CD4-positive, alpha-beta T cell (primary cell): ENCODE measurements at regions of chr1 and their contacts with region 1.

Region 1: DNA sequence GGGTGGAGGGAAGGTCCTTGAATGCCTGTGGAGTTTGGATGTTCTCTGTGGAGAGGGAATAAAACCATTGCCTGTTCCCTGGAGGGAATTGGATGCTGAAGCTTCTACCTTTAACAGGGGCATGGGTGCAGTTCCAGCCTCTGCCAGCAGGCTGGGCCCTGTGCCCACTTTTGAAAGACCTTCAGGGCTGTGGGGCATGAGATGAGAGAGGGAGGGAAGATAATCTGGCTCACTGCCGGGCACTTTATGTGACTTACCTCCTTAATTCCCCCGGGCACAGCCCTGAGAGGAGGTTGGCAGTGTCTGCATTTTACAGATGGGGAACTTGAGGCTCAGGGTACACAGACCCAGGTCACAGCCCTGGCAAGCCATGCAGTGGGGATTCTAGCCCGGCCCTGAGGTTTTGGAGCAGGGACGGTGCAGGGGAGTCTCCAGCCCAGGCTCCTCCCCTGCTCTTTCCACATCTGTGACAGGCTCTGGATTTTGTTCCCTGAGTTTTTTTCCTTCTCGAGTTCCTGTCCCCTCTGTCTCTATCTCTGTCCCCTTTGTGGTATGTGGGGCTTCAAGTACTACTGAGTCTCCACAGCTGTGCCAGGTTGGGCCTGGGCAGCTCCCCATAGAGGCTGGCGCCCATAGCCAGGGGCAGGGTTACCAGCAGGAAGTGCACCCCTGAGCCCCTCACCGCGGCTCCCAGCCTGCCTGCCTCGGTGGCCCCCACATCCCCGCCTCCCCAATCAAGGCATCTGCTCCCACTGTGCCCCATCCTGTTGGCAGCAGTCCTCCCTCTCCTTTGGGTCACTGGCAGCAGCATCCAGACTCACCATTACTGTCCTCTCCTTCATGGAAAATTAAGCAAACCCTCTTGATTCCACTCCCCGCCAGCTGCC is 14.0 kb upstream of the THEMIS2 start:
- DNase-seq: peak; percentile 73 to 91 (median 85)
- ATAC-seq: peak; percentile 100
- H3K4me3 ChIP-seq: no peak overlapping the region
- H3K4me3 Mint-ChIP-seq: no peak overlapping the region
- H3K27ac ChIP-seq: no peak overlapping the region
- H3K27ac Mint-ChIP-seq: no peak overlapping the region
- H3K4me1 ChIP-seq: peaks cover 25% of the 10 kb centered on the region
- H3K4me1 Mint-ChIP-seq: peaks cover 12% of the 10 kb centered on the region
- H3K27me3 ChIP-seq: no peaks in the 10 kb centered on the region
- H3K27me3 Mint-ChIP-seq: no peaks in the 10 kb centered on the region
- CTCF ChIP-seq: peak; percentile 97

Region 2: GRCh38 chr1:27821761-27822315 is 36.5 kb before region 1 on chr1:
- CTCF ChIA-PET with region 1: no interaction called
- POLR2A ChIA-PET with region 1: no interaction called
- intact Hi-C with region 1: no loop called
- DNase-seq: no peak
- ATAC-seq: no peak
- H3K4me3 ChIP-seq: no peak overlapping the region
- H3K4me3 Mint-ChIP-seq: no peak overlapping the region
- H3K27ac ChIP-seq: no peak overlapping the region
- H3K27ac Mint-ChIP-seq: no peak overlapping the region
- H3K4me1 ChIP-seq: no peaks in the 10 kb centered on the region
- H3K4me1 Mint-ChIP-seq: no peaks in the 10 kb centered on the region
- H3K27me3 ChIP-seq: no peaks in the 10 kb centered on the region
- H3K27me3 Mint-ChIP-seq: no peaks in the 10 kb centered on the region
- CTCF ChIP-seq: no peak

Region 3: GRCh38 chr1:27891196-27891889 is 33.0 kb after region 1 on chr1:
- CTCF ChIA-PET with region 1: interaction called, 11 read pairs
- POLR2A ChIA-PET with region 1: no interaction called
- intact Hi-C with region 1: no loop called
- DNase-seq: peak in 7 of 14 experiments; percentile 15 to 88 (median 43)
- ATAC-seq: no peak
- H3K4me3 ChIP-seq: no peak overlapping the region
- H3K4me3 Mint-ChIP-seq: no peak overlapping the region
- H3K27ac ChIP-seq: peak overlapping the region; percentile 20 to 33
- H3K27ac Mint-ChIP-seq: peak overlapping the region; percentile 70
- H3K4me1 ChIP-seq: peaks cover 70% of the 10 kb centered on the region
- H3K4me1 Mint-ChIP-seq: peaks cover 42% of the 10 kb centered on the region
- H3K27me3 ChIP-seq: no peaks in the 10 kb centered on the region
- H3K27me3 Mint-ChIP-seq: no peaks in the 10 kb centered on the region
- CTCF ChIP-seq: no peak

Region 4: GRCh38 chr1:27959400-27960217 is 101.3 kb after region 1 on chr1 and contains the start of gene XKR8:
- CTCF ChIA-PET with region 1: interaction called, 4 read pairs
- POLR2A ChIA-PET with region 1: no interaction called
- intact Hi-C with region 1: loop called in 1 of 2 experiments (anchors 5 kb)
- DNase-seq: peak; percentile 72 to 93 (median 84)
- ATAC-seq: peak; percentile 99
- H3K4me3 ChIP-seq: peak within 1 kb of the TSS; percentile 94
- H3K4me3 Mint-ChIP-seq: peak within 1 kb of the TSS; percentile 81
- H3K27ac ChIP-seq: peak within 1 kb of the TSS; percentile 67 to 79
- H3K27ac Mint-ChIP-seq: peak within 1 kb of the TSS; percentile 80
- H3K4me1 ChIP-seq: peaks cover 36% of the 10 kb centered on the region
- H3K4me1 Mint-ChIP-seq: peaks cover 16% of the 10 kb centered on the region
- H3K27me3 ChIP-seq: no peaks in the 10 kb centered on the region
- H3K27me3 Mint-ChIP-seq: no peaks in the 10 kb centered on the region
- CTCF ChIP-seq: no peak
- total RNA-seq, gene XKR8: 5.4 to 5.5 TPM

Region 5: GRCh38 chr1:27979151-27979858 is 121.0 kb after region 1 on chr1:
- CTCF ChIA-PET with region 1: interaction called, 29 read pairs
- POLR2A ChIA-PET with region 1: interaction called, 4 read pairs
- intact Hi-C with region 1: loop called (anchors 1 to 2 kb)
- DNase-seq: peak in 4 of 14 experiments; percentile 17 to 75 (median 72)
- ATAC-seq: peak; percentile 72
- H3K4me3 ChIP-seq: no peak overlapping the region
- H3K4me3 Mint-ChIP-seq: no peak overlapping the region
- H3K27ac ChIP-seq: no peak overlapping the region
- H3K27ac Mint-ChIP-seq: no peak overlapping the region
- H3K4me1 ChIP-seq: no peaks in the 10 kb centered on the region
- H3K4me1 Mint-ChIP-seq: no peaks in the 10 kb centered on the region
- H3K27me3 ChIP-seq: no peaks in the 10 kb centered on the region
- H3K27me3 Mint-ChIP-seq: no peaks in the 10 kb centered on the region
- CTCF ChIP-seq: peak; percentile 73

Region 6: DNA sequence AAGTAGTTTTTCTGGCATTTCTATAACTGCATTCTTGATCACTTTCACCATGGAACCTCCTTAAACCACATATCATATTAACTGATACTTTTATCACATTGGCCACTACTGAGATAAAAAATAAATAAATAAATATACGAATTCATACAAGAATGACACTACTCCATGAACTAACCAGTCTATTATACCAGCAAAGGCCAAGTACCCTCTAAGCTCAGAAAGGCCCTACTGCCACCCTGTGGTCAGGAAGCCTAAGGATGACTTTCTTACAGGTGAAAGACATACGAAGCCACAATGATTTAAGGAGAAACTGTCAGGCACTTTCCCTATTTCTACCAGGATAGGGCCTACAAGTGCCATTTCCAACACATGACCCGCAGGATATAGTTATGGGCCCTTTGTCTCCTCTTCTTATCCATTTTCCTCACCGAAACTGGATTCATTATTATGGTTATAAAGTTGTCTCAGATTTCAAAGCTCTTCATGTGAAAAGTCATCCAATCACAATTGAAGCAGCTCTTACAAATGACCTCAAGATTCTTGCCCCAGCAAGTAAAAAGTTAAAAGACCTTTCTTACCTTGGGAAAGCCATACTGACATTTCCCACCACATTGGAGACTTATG is 350.6 kb after region 1 on chr1:
- CTCF ChIA-PET with region 1: interaction called, 3 read pairs
- POLR2A ChIA-PET with region 1: interaction called, 4 read pairs
- intact Hi-C with region 1: loop called (anchors 2 kb)
- DNase-seq: peak; percentile 38 to 81 (median 54)
- ATAC-seq: peak; percentile 86
- H3K4me3 ChIP-seq: no peak overlapping the region
- H3K4me3 Mint-ChIP-seq: no peak overlapping the region
- H3K27ac ChIP-seq: no peak overlapping the region
- H3K27ac Mint-ChIP-seq: no peak overlapping the region
- H3K4me1 ChIP-seq: no peaks in the 10 kb centered on the region
- H3K4me1 Mint-ChIP-seq: peaks cover 7% of the 10 kb centered on the region
- H3K27me3 ChIP-seq: no peaks in the 10 kb centered on the region
- H3K27me3 Mint-ChIP-seq: no peaks in the 10 kb centered on the region
- CTCF ChIP-seq: peak; percentile 68